Activated CD4-positive, alpha-beta T cell treated with anti-CD3 and anti-CD28 coated beads for 36 hours (primary cell): ENCODE measurements at regions of chr19 and their contacts with region 1.

Region 1: DNA sequence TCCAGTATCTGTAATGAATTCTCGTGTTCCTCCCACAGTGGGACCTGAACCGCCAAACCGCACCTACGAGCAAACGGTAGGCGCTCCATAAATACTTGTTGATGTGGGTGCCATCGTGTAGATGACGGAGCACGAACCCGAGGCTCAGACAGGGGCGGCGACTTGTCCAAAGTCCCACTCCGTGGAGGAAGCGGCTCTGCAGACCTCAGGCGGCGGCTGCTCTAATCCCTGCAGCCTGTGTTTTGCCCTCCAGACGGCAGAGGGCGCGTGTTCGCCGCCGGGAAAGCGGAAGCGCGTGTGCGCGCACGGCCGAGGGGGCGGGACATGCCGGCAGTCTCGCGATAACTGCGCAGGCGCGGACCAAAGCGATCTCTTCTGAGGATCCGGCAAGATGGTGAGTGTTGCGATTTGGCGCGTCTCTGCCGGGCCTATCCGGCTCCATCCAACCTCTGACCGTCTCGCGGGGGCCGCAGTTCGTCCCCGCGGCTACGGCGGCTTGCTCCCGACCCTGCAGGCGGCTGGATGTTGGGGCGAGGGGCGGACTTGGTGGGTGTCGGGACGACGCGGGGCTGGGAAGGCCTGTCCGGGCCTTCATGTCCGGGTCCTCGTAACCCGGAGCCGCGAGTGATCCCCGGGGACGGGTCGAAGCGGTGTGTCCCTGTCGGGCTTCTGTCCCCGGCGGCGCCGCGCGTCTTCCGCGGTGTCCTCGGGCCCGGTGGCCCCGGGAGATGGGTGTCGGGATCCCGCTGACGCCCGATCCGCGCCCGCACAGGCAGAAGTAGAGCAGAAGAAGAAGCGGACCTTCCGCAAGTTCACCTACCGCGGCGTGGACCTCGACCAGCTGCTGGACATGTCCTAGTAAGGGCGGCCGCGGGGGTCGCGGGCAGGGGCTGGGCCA is at the start of gene RPS15:
- DNase-seq: peak; percentile 98
- ATAC-seq: peak; percentile 86
- H3K4me3 Mint-ChIP-seq: peak within 1 kb of the TSS; percentile 94
- H3K27ac Mint-ChIP-seq: peak within 1 kb of the TSS; percentile 99
- H3K4me1 Mint-ChIP-seq: peaks cover 34% of the 10 kb centered on the region
- H3K27me3 Mint-ChIP-seq: no peaks in the 10 kb centered on the region
- total RNA-seq, gene RPS15: 1,716 to 1,858 TPM

Region 2: DNA sequence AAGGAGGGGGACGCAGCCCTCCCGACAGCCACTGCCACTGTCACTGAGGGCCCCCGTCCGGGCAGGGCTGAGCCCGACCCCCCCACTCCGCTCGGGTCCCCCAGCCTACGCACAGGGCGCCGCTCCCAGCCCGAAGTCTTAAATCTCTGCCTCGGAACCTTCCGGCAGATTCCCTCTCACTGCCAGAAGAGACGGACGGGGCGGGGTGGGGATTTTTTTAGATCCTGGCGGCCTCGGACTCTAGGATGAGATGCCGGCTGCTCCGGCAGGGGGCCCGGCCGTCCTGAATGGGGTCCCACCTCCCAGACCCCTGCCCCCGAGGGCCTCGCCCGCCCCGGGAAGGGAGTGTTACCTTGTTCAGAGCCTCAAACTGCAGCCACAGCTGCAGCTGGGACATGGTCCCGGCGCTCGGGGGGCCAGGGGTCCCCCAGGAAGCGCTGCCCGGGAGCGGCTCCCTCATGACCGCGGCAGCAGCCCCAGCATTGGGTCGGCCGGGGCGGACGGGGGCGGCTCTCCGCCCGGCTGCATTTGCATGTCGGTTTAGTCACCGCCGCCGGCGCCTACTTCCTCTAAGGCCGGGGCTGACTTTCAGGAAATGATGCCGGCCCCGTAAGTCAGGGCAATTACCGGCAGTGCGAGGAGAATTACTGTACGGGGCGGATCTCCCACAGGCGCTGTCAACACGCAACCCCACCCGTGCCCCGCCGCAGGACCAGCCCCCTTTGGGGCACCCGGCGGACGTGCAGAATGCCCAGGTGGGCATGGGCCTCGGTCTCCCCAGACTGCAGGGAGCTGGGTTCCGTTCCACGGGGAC is 306.3 kb before region 1 on chr19:
- CTCF ChIA-PET with region 1: no interaction called
- POLR2A ChIA-PET with region 1: no interaction called
- intact Hi-C with region 1: no loop called
- DNase-seq: peak; percentile 96
- ATAC-seq: peak; percentile 60
- H3K4me3 Mint-ChIP-seq: peak overlapping the region; percentile 91
- H3K27ac Mint-ChIP-seq: peak overlapping the region; percentile 96
- H3K4me1 Mint-ChIP-seq: peaks cover 46% of the 10 kb centered on the region
- H3K27me3 Mint-ChIP-seq: no peaks in the 10 kb centered on the region

Region 3: GRCh38 chr19:1513499-1514294 is 75.4 kb after region 1 on chr19:
- CTCF ChIA-PET with region 1: no interaction called
- POLR2A ChIA-PET with region 1: no interaction called
- intact Hi-C with region 1: loop called in 1 of 2 experiments (anchors 1 kb)
- DNase-seq: peak; percentile 88
- ATAC-seq: peak; percentile 60
- H3K4me3 Mint-ChIP-seq: no peak overlapping the region
- H3K27ac Mint-ChIP-seq: no peak overlapping the region
- H3K4me1 Mint-ChIP-seq: peaks cover 7% of the 10 kb centered on the region
- H3K27me3 Mint-ChIP-seq: no peaks in the 10 kb centered on the region

Region 4: DNA sequence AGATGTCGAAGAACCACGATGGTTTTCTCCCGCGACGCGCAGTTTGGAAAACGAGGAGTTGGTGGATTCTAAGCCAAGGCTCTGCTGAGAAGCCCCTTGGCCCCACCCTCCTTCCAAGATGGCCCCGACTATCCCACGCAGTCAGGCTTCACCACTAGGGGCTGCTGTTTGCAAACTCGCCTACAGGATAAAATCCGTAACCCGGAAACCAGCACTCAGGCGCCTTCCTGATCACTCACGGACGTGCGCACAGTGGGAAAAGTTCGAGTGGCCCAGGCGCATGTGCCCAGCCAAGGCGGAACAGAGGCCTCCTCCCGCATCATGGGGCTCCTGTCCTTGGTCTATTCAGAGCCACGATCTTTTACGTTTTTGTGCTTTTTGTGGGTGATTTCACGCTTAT is 186.2 kb after region 1 on chr19:
- CTCF ChIA-PET with region 1: no interaction called
- POLR2A ChIA-PET with region 1: no interaction called
- intact Hi-C with region 1: no loop called
- DNase-seq: peak; percentile 78
- ATAC-seq: peak; percentile 74
- H3K4me3 Mint-ChIP-seq: no peak overlapping the region
- H3K27ac Mint-ChIP-seq: peak overlapping the region; percentile 29
- H3K4me1 Mint-ChIP-seq: no peaks in the 10 kb centered on the region
- H3K27me3 Mint-ChIP-seq: no peaks in the 10 kb centered on the region